ENCODE measurements at regions of chr16 and their contacts with region 1.

Region 1: GRCh38 chr16:85610508-85611332 is 2.4 kb upstream of the GSE1 start:
- DNase-seq: peak; percentile 91 to 92
- H3K4me3 ChIP-seq: peak overlapping the region; percentile 65 to 85
- H3K27ac ChIP-seq: peak overlapping the region; percentile 96 to 98
- H3K4me1 ChIP-seq: peaks cover 5 to 75% (median 45%) of the 10 kb centered on the region in 4 donors
- H3K27me3 ChIP-seq: no peaks in the 10 kb centered on the region
- CTCF ChIP-seq: peak; percentile 99

Region 2: DNA sequence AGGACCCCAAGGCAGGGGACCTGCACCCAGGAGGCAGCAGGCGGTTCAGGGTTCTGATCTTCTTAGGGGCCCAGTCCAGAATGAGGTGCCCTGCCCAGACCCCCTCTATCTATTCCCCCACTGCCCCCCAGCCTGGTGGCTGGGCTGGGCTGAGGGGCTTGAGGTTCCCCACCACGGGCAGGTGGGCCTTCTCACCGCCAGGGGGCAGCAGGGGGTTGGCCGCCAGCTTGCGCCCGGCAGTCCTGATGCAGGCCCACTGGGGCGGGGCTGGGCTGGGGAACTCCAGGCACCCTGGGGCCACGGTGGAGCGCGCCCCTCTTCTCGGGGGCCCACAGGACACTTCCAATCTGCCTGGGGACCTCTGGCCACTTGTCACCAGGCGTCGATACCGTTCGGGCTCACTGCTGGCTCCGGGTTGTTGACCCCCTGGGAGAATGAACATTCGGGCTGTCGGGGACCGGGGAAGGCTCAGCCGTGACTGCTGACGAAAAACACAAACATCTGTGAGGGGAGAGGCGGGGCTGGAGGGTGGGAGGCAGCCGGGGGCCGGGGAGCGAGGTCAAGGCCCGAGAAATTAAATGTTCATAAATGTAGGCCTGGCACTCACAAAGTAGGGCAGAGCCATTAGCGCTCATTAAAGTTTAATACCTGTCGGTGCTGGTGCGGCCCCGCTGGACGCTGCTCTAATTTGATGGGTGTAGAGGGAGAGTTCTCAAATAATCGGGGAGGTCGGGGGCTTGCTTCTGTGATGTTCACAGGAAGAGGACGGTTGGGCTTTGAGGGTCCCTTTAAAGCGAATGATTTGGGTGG is 216.8 kb before region 1 on chr16:
- intact Hi-C with region 1: loop called (anchors 10 kb)
- DNase-seq: peak; percentile 26 to 78
- H3K4me3 ChIP-seq: no peak overlapping the region
- H3K27ac ChIP-seq: peak overlapping the region; percentile 78 to 89
- H3K4me1 ChIP-seq: peaks cover 0 to 52% (median 46%) of the 10 kb centered on the region in 4 donors
- H3K27me3 ChIP-seq: no peaks in the 10 kb centered on the region
- CTCF ChIP-seq: peak; percentile 68 to 71

Region 3: DNA sequence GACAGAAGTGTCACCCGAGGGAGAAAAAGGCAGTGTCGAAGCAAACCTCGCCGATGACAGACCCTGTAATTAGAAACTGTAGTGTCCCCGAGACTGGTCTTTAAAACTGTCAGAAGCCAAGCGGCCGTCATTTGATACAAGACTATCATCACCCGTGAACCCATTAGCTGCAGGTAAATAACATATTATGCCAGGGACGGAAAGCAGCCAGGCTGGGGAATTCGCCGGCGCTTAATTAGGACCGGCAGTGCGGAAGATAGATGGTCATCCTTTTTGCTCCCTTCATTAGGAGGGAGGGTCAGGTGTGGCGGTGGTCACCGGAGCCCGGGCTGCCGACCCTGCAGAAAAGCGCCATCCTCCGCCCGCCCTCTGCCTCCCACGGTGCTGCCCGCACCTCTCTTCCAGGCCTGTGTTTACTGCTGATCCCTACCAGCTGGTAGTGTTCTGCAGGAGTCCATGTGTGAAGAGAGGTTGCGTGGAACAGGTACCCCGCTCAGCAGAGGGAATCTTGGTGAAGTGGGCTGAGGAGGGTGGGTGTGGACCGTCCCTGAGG is 107.0 kb before region 1 on chr16:
- intact Hi-C with region 1: loop called (anchors 5 kb)
- DNase-seq: no peak
- H3K4me3 ChIP-seq: no peak overlapping the region
- H3K27ac ChIP-seq: no peak overlapping the region
- H3K4me1 ChIP-seq: no peaks in the 10 kb centered on the region
- H3K27me3 ChIP-seq: no peaks in the 10 kb centered on the region
- CTCF ChIP-seq: no peak

Region 4: GRCh38 chr16:85554112-85554813 is 56.5 kb before region 1 on chr16:
- intact Hi-C with region 1: loop called (anchors 5 kb)
- DNase-seq: peak; percentile 84 to 91
- H3K4me3 ChIP-seq: peak overlapping the region; percentile 90 to 91
- H3K27ac ChIP-seq: peak overlapping the region; percentile 87 to 95
- H3K4me1 ChIP-seq: peaks cover 0 to 62% (median 28%) of the 10 kb centered on the region in 4 donors
- H3K27me3 ChIP-seq: no peaks in the 10 kb centered on the region
- CTCF ChIP-seq: no peak

Region 5: GRCh38 chr16:86751076-86752030 is 1140.6 kb after region 1 on chr16:
- intact Hi-C with region 1: no loop called
- DNase-seq: peak; percentile 63 to 78
- H3K4me3 ChIP-seq: no peak overlapping the region
- H3K27ac ChIP-seq: peak overlapping the region; percentile 77 to 92
- H3K4me1 ChIP-seq: peaks cover 6 to 39% (median 33%) of the 10 kb centered on the region in 4 donors
- H3K27me3 ChIP-seq: no peaks in the 10 kb centered on the region
- CTCF ChIP-seq: no peak

Measured in tibial artery (tissue), 4 donors.